ENCODE measurements at regions of chrX and their contacts with region 1.

Region 1: DNA sequence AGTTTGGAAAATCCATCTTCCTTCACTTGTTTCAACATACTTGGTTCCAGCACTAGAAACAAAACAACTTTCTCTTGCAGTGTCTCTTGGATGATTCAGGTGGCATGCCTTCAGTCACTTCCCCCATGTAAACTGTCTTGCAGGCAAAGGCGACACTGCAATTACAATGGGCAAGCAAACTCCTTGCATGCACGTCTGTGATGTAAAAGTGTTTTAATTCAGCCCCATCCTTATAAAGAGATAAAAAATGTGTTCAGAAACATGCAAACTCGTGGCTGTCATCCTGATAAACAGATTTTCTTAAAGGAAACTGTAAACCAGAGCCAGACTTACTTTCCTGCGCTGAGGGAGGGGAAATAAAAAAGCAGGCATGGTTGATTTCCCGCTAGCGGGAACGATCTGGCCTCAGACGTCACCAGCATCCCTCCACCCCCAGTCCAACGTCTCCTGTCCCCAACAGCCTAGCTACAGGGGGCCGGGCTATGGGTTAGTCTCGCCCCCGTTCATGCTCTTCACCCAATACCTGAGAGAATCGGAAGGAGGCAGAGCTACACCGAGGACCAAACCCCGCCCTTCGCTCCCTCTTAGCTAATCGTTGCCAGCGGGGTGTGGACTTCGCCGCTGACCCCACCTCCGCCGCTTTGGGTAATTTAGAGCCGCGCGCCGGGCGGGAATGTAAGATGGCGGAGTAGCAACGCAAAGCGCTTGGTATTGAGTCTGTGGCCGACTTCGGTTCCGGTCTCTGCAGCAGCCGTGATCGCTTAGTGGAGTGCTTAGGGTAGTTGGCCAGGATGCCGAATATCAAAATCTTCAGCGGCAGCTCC is at the start of gene PRPS1:
- DNase-seq: peak; percentile 76 to 95 (median 87)
- ATAC-seq: peak; percentile 96
- H3K4me3 ChIP-seq: peak within 1 kb of the TSS; percentile 81 to 95
- H3K4me3 Mint-ChIP-seq: peak within 1 kb of the TSS; percentile 87
- H3K27ac ChIP-seq: peak within 1 kb of the TSS; percentile 79 to 95
- H3K27ac Mint-ChIP-seq: peak within 1 kb of the TSS; percentile 93
- H3K4me1 ChIP-seq: peaks cover 8% of the 10 kb centered on the region
- H3K4me1 Mint-ChIP-seq: peaks cover 33% of the 10 kb centered on the region
- H3K27me3 ChIP-seq: no peaks in the 10 kb centered on the region
- H3K27me3 Mint-ChIP-seq: no peaks in the 10 kb centered on the region
- CTCF ChIP-seq: no peak
- total RNA-seq, gene PRPS1: 65.6 to 74.7 TPM

Region 2: GRCh38 chrX:106611679-106612392 is 1016.2 kb before region 1 on chrX and contains the start of gene RADX:
- CTCF ChIA-PET with region 1: no interaction called
- POLR2A ChIA-PET with region 1: no interaction called
- intact Hi-C with region 1: loop called in 1 of 2 experiments (anchors 10 kb)
- DNase-seq: peak; percentile 72 to 94 (median 83)
- ATAC-seq: peak; percentile 93
- H3K4me3 ChIP-seq: peak within 1 kb of the TSS; percentile 58 to 88
- H3K4me3 Mint-ChIP-seq: peak within 1 kb of the TSS; percentile 94
- H3K27ac ChIP-seq: peak within 1 kb of the TSS; percentile 77 to 81
- H3K27ac Mint-ChIP-seq: peak within 1 kb of the TSS; percentile 93
- H3K4me1 ChIP-seq: peaks cover 8% of the 10 kb centered on the region
- H3K4me1 Mint-ChIP-seq: peaks cover 35% of the 10 kb centered on the region
- H3K27me3 ChIP-seq: no peaks in the 10 kb centered on the region
- H3K27me3 Mint-ChIP-seq: no peaks in the 10 kb centered on the region
- CTCF ChIP-seq: no peak
- total RNA-seq, gene RADX: 8.9 to 9.1 TPM

Region 3: DNA sequence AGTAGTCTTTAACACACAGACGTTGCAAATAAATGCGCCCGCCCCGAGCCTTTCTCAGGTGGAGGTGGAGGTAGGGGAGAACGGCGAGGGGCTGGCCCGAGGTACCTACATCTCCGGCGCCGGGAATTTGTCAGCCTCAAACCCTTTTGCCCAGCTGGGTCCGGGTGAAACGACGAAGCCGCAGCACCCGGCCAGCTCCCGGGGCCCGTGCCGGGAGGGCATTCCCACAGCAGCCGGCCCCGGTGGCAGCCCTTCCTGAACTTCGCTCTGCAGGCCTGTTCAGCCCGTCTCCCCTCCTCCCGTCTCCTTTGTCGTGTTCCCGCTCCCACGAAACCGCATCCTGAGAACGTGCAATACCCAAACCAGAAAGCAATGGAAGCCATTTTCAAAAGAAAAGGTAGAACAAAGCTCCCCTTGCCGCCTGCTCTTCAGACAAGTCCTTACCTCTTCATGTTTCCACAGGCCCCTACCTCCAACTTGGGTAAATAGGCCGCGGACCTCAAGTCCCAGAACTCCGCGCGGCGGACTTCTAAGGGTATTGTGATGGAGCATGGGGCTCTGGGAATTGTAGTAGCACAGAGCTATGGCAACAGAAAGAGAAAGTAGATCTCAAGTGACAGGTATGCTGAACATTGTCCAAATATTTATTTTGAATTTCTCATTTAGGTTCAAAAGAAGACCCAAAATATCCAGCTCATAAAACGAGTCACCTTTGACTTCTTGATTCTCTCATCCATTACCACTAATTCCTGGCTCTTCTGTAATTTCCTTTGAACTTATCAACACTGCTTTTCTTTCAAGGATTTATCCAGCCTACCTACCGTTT is 509.5 kb before region 1 on chrX and contains the start of gene RBM41:
- CTCF ChIA-PET with region 1: no interaction called
- POLR2A ChIA-PET with region 1: no interaction called
- intact Hi-C with region 1: loop called in 1 of 2 experiments (anchors 5 kb)
- DNase-seq: peak; percentile 46 to 87 (median 72)
- ATAC-seq: peak; percentile 99
- H3K4me3 ChIP-seq: peak within 1 kb of the TSS; percentile 68 to 70
- H3K4me3 Mint-ChIP-seq: peak within 1 kb of the TSS; percentile 95
- H3K27ac ChIP-seq: peak within 1 kb of the TSS; percentile 49 to 77
- H3K27ac Mint-ChIP-seq: peak within 1 kb of the TSS; percentile 95
- H3K4me1 ChIP-seq: peaks cover 11% of the 10 kb centered on the region
- H3K4me1 Mint-ChIP-seq: peaks cover 37% of the 10 kb centered on the region
- H3K27me3 ChIP-seq: no peaks in the 10 kb centered on the region
- H3K27me3 Mint-ChIP-seq: no peaks in the 10 kb centered on the region
- CTCF ChIP-seq: no peak
- total RNA-seq, gene RBM41: 6.9 to 7.8 TPM

Region 4: GRCh38 chrX:107450823-107451509 is 177.1 kb before region 1 on chrX:
- CTCF ChIA-PET with region 1: no interaction called
- POLR2A ChIA-PET with region 1: no interaction called
- intact Hi-C with region 1: loop called in 1 of 2 experiments (anchors 5 kb)
- DNase-seq: peak in 6 of 9 experiments; percentile 11 to 81 (median 54)
- ATAC-seq: peak; percentile 57
- H3K4me3 ChIP-seq: peak overlapping the region; percentile 23 to 46
- H3K4me3 Mint-ChIP-seq: peak overlapping the region; percentile 78
- H3K27ac ChIP-seq: peak overlapping the region in 1 of 2 experiments; percentile 73
- H3K27ac Mint-ChIP-seq: peak overlapping the region; percentile 75
- H3K4me1 ChIP-seq: no peaks in the 10 kb centered on the region
- H3K4me1 Mint-ChIP-seq: peaks cover 18% of the 10 kb centered on the region
- H3K27me3 ChIP-seq: no peaks in the 10 kb centered on the region
- H3K27me3 Mint-ChIP-seq: peaks cover 26% of the 10 kb centered on the region
- CTCF ChIP-seq: no peak

Region 5: GRCh38 chrX:107599450-107599861 is 28.6 kb before region 1 on chrX:
- CTCF ChIA-PET with region 1: no interaction called
- POLR2A ChIA-PET with region 1: no interaction called
- intact Hi-C with region 1: no loop called
- DNase-seq: no peak
- ATAC-seq: no peak
- H3K4me3 ChIP-seq: no peak overlapping the region
- H3K4me3 Mint-ChIP-seq: no peak overlapping the region
- H3K27ac ChIP-seq: no peak overlapping the region
- H3K27ac Mint-ChIP-seq: no peak overlapping the region
- H3K4me1 ChIP-seq: no peaks in the 10 kb centered on the region
- H3K4me1 Mint-ChIP-seq: no peaks in the 10 kb centered on the region
- H3K27me3 ChIP-seq: no peaks in the 10 kb centered on the region
- H3K27me3 Mint-ChIP-seq: peaks cover 3% of the 10 kb centered on the region
- CTCF ChIP-seq: no peak

Region 6: GRCh38 chrX:107716816-107717700 is 89.0 kb after region 1 on chrX:
- CTCF ChIA-PET with region 1: no interaction called
- POLR2A ChIA-PET with region 1: interaction called, 7 read pairs
- intact Hi-C with region 1: loop called in 1 of 2 experiments (anchors 1 kb)
- DNase-seq: peak; percentile 78 to 94 (median 90)
- ATAC-seq: peak; percentile 66
- H3K4me3 ChIP-seq: peak overlapping the region; percentile 78 to 91
- H3K4me3 Mint-ChIP-seq: peak overlapping the region; percentile 93
- H3K27ac ChIP-seq: peak overlapping the region; percentile 100
- H3K27ac Mint-ChIP-seq: peak overlapping the region; percentile 99
- H3K4me1 ChIP-seq: peaks cover 42% of the 10 kb centered on the region
- H3K4me1 Mint-ChIP-seq: peaks cover 48% of the 10 kb centered on the region
- H3K27me3 ChIP-seq: no peaks in the 10 kb centered on the region
- H3K27me3 Mint-ChIP-seq: no peaks in the 10 kb centered on the region
- CTCF ChIP-seq: no peak

Region 7: GRCh38 chrX:107741404-107741790 is 113.3 kb after region 1 on chrX:
- CTCF ChIA-PET with region 1: no interaction called
- POLR2A ChIA-PET with region 1: interaction called, 11 read pairs
- intact Hi-C with region 1: loop called in 1 of 2 experiments (anchors 1 kb)
- DNase-seq: peak in 1 of 9 experiments; percentile 22
- ATAC-seq: peak; percentile 6
- H3K4me3 ChIP-seq: peak overlapping the region; percentile 29
- H3K4me3 Mint-ChIP-seq: peak overlapping the region; percentile 80
- H3K27ac ChIP-seq: peak overlapping the region; percentile 68 to 73
- H3K27ac Mint-ChIP-seq: peak overlapping the region; percentile 97
- H3K4me1 ChIP-seq: peaks cover 48% of the 10 kb centered on the region
- H3K4me1 Mint-ChIP-seq: peaks cover 44% of the 10 kb centered on the region
- H3K27me3 ChIP-seq: no peaks in the 10 kb centered on the region
- H3K27me3 Mint-ChIP-seq: no peaks in the 10 kb centered on the region
- CTCF ChIP-seq: no peak

Measured in CD8-positive, alpha-beta T cell (primary cell).